ENCODE measurements at regions of chr1 and their contacts with region 1.

Region 1: GRCh38 chr1:17657436-17657835 is 97.7 kb upstream of the ACTL8 start:
- DNase-seq: no peak
- H3K4me3 ChIP-seq: no peak overlapping the region
- H3K27ac ChIP-seq: no peak overlapping the region
- H3K4me1 ChIP-seq: no peaks in the 10 kb centered on the region
- H3K27me3 ChIP-seq: no peaks in the 10 kb centered on the region
- CTCF ChIP-seq: no peak
- POLR2A ChIP-seq: no peak

Region 2: GRCh38 chr1:17348125-17348979 is 309.1 kb before region 1 on chr1:
- intact Hi-C with region 1: no loop called
- DNase-seq: no peak
- H3K4me3 ChIP-seq: no peak overlapping the region
- H3K27ac ChIP-seq: no peak overlapping the region
- H3K4me1 ChIP-seq: no peaks in the 10 kb centered on the region
- H3K27me3 ChIP-seq: no peaks in the 10 kb centered on the region
- CTCF ChIP-seq: no peak
- POLR2A ChIP-seq: no peak

Region 3: DNA sequence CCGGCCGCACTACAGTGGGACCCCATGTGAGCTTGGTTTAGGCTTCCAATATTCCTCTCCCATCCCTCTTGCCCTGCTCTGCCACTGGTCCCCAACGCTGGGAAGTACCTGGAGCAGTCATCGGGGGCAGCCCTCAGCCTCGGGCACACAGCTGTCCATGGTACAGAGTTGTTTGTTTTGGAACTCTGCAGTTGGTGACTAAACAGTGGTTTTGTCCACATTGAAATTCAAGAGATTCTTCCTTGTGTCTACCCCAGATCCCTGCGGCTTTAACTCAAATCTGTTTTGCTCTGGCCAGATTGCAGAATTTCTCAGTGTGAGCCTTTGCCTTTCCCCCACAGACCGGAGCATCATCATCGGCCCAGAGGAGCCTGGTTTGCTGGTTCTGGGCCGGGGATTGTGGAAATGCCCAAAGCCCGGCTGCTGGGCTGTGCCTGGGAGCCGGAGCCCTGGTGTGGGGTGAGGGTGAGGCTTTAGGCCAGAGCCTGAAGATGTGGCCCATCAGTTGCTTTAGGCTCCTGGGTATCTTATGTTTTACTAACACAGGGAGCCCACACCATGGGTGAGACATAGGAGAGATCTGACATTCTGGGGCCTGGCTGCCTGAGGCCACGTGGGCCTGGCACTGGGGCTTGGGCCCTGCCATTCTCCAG is 24.8 kb before region 1 on chr1:
- intact Hi-C with region 1: loop called (anchors 1 kb)
- DNase-seq: no peak
- H3K4me3 ChIP-seq: no peak overlapping the region
- H3K27ac ChIP-seq: no peak overlapping the region
- H3K4me1 ChIP-seq: peaks cover 16% of the 10 kb centered on the region
- H3K27me3 ChIP-seq: no peaks in the 10 kb centered on the region
- CTCF ChIP-seq: no peak
- POLR2A ChIP-seq: no peak